ENCODE measurements at regions of chr17 and their contacts with region 1.

Region 1: DNA sequence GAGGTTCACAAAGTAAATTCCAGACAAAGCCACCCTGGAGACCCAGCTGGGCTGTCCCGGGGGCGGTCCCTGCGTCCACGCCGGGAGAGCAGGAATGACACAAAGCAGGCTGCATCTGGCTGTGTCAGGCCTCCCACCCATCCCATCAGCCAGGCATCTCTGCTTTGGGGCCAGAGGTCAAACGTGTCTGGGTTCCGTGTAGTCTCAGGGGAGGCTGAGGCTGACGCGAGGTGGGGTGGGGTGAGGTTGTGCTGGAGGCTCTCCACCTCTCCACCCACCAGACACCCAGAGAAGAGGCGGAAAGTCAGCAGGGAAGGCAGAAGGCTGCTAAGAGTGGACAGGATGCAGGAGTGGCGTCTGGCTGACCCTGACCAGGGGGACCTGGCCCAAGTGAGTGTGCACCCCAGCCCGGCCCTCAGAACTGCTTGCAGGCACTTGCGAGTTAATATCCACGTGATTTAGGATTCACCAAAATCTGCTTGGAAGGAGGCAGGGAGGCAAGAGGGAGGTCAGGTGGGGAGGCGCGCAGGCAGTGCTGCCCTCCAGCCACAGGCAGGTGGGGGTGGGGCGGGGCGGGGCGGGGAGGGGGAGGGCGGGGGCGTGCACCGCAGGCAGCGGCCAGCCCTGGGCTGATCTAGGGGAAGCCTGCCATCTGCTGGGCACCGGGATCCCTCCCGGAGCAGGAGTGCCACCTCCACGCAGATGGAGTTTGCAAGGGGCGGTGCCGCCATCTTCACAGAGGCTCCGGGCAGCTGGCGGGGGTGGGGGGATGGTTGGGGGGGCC is 44.3 kb downstream of the TBC1D16 start:
- DNase-seq: peak; percentile 94

Region 2: DNA sequence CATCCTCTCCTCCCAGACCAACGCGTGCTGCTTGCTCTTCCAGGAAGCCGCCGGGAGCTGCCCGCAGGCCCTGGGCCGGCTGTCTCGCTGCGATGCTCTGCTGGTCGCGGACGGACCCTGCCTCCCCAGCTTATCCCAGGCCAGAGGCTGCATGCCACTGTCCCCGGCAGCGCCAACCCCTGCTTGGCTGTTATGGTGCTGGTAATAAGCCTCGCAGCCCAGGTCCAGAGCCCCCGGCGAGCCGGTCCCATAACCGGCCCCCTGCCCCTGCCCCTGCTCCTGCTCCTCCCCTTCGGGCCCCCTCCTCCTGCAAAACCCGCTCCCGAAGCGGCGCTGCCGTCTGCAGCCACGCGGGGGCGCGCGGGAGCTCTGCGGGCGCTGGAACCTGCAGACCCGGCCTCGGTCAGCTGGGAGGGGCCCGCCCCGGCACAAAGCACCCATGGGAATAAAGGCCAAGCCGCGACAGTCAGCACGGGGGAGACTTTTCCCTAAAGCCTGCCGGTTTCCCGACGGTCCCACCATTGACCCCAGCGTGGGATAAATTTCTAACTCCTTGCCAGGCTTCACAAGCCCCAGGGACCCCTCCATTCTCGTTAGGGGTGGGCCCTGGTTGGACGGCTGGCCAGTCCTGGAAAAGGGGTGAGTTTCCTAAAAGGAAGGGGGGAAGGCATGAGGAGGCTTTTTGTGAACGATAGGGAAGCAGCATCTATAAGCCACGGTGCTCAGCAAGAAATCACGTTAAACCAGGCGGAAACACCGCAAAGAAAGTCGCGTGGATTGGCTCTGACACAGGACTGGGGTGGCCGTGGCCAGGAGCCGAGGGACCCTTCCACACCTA is 249.4 kb before region 1 on chr17:
- intact Hi-C with region 1: loop called (anchors 5 kb)
- DNase-seq: peak; percentile 89

Region 3: GRCh38 chr17:79789534-79790353 is 201.6 kb before region 1 on chr17:
- intact Hi-C with region 1: loop called (anchors 5 kb)
- DNase-seq: no peak

Region 4: GRCh38 chr17:79810130-79811010 is 181.0 kb before region 1 on chr17:
- intact Hi-C with region 1: loop called (anchors 5 kb)
- DNase-seq: peak; percentile 89

Region 5: GRCh38 chr17:79839363-79840268 is 151.7 kb before region 1 on chr17 and contains the start of gene CBX4:
- intact Hi-C with region 1: loop called (anchors 5 kb)
- DNase-seq: peak; percentile 98
- total RNA-seq, gene CBX4: 23.8 TPM